HepG2 (cell line): ENCODE measurements at regions of chrX and their contacts with region 1.

Region 1: DNA sequence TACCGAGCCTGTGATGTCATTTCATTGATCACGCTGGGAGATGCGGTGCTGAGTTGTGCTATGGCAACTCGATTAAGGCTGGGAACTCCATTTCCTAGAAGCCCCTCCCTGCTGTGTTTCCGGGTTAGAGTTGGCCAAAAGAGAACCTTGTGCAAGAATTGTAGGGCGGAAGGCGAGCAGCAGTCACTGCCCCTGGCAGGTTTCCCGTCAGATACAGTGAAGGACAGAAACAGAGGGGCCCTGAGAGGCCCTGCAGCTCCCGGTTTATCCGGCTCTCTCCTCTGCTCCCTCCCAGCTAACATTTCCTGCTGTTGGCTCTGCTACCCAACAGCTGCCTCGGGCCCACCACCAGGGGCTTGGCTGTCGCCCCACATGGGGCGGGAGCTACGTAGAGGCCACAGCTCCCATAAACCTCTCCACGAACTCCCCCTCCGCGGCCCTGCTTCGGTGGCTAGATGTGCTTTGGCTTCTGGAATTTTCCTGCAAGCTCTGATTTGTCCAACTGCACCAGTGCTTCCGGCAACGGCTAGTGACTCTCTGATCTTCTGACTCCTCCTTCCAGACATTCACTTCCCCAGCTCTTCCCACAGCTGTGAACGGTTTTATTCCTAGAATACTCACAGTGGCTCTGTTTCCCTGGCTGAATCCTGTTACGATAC is 74.9 kb upstream of the USP9X start:
- DNase-seq: peak; percentile 89
- ATAC-seq: peak; percentile 98
- H3K4me3 ChIP-seq: peak overlapping the region; percentile 25 to 54 (median 34); a peak in 4 of 6 replicates
- H3K27ac ChIP-seq: peak overlapping the region; percentile 96
- H3K4me1 ChIP-seq: peaks cover 28% of the 10 kb centered on the region
- H3K27me3 ChIP-seq: no peaks in the 10 kb centered on the region
- CTCF ChIP-seq: 0 out of 2 replicates have a peak, but pooled peaks have one; percentile 19
- EP300 ChIP-seq: no peak; a peak in 1 of 4 replicates
- POLR2A ChIP-seq: peak in 1 of 2 experiments; percentile 75; a peak in 2 of 4 replicates
- RAD21 ChIP-seq: peak; percentile 46; the same call in 1 of the 2 replicates

Region 2: DNA sequence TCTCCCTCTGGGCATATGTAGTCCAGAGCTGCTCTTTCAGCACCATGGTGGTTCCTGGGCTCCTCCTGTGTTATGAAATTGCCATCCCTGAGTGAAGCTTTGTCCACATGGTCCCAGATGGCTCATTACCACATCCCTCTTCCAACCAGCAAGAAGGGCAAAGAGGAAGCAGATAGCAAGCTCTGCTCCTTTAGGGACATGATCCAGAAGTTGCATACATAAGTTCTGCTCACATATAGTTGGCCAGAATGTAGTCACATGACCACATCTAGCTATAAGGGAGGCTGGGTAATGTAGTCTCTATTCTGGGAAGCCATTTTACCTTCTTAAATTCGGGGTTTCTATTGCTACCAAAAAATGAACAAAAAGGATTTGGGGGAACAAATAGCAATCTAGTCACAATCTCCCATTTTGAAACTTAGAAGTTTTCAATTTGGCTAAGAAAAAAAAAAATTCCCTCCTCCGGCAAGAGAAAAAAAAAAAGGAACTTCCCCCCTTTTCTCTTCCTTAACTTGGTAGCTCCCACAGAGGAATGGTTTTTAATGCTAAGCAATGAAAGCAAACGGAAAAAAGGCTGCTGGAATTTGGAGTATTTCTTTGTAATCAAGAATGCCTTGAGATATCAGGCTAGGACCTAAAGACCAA is 13.3 kb before region 1 on chrX:
- CTCF ChIA-PET with region 1: no interaction called
- POLR2A ChIA-PET with region 1: interaction called, 26 read pairs
- in situ Hi-C with region 1: no loop called
- intact Hi-C with region 1: no loop called
- DNase-seq: peak; percentile 70
- ATAC-seq: peak; percentile 85
- H3K4me3 ChIP-seq: peak overlapping the region; percentile 17 to 52 (median 43); a peak in 3 of 6 replicates
- H3K27ac ChIP-seq: no peak overlapping the region
- H3K4me1 ChIP-seq: peaks cover 20% of the 10 kb centered on the region
- H3K27me3 ChIP-seq: no peaks in the 10 kb centered on the region
- CTCF ChIP-seq: no peak
- EP300 ChIP-seq: no peak
- POLR2A ChIP-seq: no peak
- RAD21 ChIP-seq: no peak

Region 3: DNA sequence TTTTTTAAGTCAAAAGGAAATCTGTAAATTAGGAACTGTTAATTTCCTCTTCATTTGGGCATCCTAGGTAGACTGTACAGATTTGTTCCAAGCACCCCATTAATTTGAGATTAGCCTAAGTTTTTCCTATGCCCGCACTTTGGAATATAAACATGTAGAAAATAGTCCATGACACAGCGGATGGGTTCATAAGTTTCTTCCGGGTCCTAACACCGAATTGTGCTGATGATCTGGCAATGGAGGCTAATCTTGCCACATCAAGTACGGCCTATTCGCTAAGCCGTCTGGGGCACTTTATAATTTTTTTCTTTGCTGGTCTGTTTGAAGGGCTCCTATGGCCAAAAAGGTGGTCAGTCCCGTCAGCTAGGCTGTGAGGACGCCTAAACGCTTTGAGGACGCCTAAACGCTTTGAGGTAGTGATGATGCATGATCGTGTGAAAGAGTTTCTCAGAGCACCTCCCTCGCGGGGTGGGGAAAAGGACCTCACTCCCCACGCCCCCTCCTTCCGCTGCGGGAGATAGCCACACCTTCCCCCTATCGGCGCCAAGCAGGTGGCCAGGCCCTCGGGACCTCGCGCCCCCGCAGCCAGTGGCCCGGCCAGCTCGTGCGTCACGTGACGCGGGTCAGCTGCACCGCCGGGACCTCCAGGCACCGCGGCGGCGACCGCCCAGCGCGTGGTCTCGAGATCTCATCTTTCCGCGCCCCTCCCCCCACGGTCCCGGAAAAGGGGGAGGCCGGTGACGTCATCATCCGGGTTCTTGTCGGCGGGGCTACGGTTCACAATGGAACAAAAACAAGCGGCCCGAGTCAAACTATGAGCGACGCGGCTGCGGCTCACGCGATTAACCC is 74.0 kb after region 1 on chrX:
- CTCF ChIA-PET with region 1: no interaction called
- POLR2A ChIA-PET with region 1: interaction called, 16 read pairs
- in situ Hi-C with region 1: no loop called
- intact Hi-C with region 1: loop called (anchors 2 kb)
- DNase-seq: peak; percentile 87
- ATAC-seq: peak; percentile 79
- H3K4me3 ChIP-seq: peak overlapping the region; percentile 84 to 96 (median 85)
- H3K27ac ChIP-seq: peak overlapping the region; percentile 100
- H3K4me1 ChIP-seq: peaks cover 17% of the 10 kb centered on the region
- H3K27me3 ChIP-seq: no peaks in the 10 kb centered on the region
- CTCF ChIP-seq: 0 out of 2 replicates have a peak, but pooled peaks have one; percentile 5
- EP300 ChIP-seq: no peak; a peak in 1 of 4 replicates
- POLR2A ChIP-seq: peak; percentile 68 to 84
- RAD21 ChIP-seq: peak; percentile 25; the same call in 1 of the 2 replicates

Region 4: DNA sequence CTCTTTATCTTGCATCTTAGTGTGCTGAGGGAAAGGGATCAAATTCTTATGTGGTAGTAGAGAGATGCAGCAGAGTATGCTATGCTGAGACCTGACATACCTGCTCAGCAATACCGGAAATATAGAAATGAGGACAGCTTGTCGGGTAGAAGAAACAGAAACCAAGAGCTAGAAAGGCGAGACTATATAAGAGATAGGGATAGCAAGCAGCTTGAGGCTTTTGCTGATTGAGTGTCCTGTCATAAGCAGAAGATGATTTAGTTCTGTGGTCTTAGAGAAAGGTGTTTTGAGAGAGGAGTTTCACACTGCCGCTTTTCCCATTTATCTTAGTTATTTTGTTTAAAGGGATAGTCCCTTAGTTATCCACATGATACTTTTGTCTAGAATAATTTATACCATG is 106.6 kb after region 1 on chrX:
- CTCF ChIA-PET with region 1: no interaction called
- POLR2A ChIA-PET with region 1: no interaction called
- in situ Hi-C with region 1: loop called (anchors 10 kb)
- intact Hi-C with region 1: no loop called
- DNase-seq: no peak
- ATAC-seq: no peak
- H3K4me3 ChIP-seq: no peak overlapping the region
- H3K27ac ChIP-seq: no peak overlapping the region
- H3K4me1 ChIP-seq: peaks cover 16% of the 10 kb centered on the region; the same call in 1 of the 2 replicates
- H3K27me3 ChIP-seq: no peaks in the 10 kb centered on the region
- CTCF ChIP-seq: no peak
- EP300 ChIP-seq: no peak
- POLR2A ChIP-seq: no peak
- RAD21 ChIP-seq: no peak